ENCODE measurements at regions of chr20 and their contacts with region 1.

Region 1: GRCh38 chr20:62301773-62302340 is 940 bp upstream of the ADRM1 start:
- DNase-seq: peak; percentile 93
- H3K4me3 Mint-ChIP-seq: peak overlapping the region; percentile 93
- H3K27ac Mint-ChIP-seq: peak overlapping the region; percentile 99
- H3K4me1 Mint-ChIP-seq: peaks cover 31% of the 10 kb centered on the region
- H3K27me3 Mint-ChIP-seq: peaks cover 4% of the 10 kb centered on the region

Region 2: GRCh38 chr20:62382306-62383198 is 80.7 kb after region 1 on chr20:
- CTCF ChIA-PET with region 1: interaction called, 10 read pairs
- DNase-seq: peak; percentile 87
- H3K4me3 Mint-ChIP-seq: no peak overlapping the region
- H3K27ac Mint-ChIP-seq: no peak overlapping the region
- H3K4me1 Mint-ChIP-seq: peaks cover 28% of the 10 kb centered on the region
- H3K27me3 Mint-ChIP-seq: no peaks in the 10 kb centered on the region